GM12878 (cell line): ENCODE measurements at regions of chr6 and their contacts with region 1.

Region 1: DNA sequence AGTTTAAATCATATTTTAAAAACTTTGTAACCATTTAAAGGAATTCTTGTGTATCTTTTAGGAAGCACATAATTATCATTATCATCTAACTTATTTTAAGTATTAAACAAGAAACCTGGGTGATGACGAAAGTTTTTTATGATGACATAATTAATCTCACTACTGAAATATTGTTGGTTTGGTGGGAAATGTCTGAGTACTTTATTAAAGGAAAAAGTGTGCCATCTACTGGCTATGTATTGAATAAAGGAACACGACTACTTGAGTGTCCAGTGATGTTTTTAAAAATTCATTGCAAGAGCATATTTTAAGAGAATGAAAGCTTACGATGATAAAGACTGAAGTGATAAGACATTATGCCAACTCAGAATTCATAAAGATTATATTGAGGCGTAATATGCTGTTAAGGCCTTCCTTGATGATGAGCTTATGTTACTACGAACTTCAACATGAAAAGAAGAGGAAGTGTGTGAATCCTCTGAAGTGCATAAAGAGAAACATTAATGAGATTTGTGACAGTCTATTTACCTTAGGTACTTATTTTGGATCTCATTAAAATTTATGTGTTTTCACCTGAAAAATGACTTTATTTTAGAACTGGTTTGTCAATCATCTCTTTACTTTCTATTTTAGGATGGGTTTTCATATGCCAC is 12.0 kb upstream of the TRMT11 start:
- DNase-seq: no peak
- ATAC-seq: peak; percentile 93
- H3K4me3 ChIP-seq: no peak overlapping the region
- H3K27ac ChIP-seq: no peak overlapping the region
- H3K4me1 ChIP-seq: no peaks in the 10 kb centered on the region
- H3K27me3 ChIP-seq: no peaks in the 10 kb centered on the region
- CTCF ChIP-seq: peak; percentile 21 to 57 (median 49); a peak in 3 of 6 replicates
- EP300 ChIP-seq: no peak
- POLR2A ChIP-seq: no peak
- RAD21 ChIP-seq: peak; percentile 48

Region 2: GRCh38 chr6:125764121-125764671 is 210.1 kb before region 1 on chr6:
- CTCF ChIA-PET with region 1: interaction called, 11 read pairs
- POLR2A ChIA-PET with region 1: no interaction called
- RAD21 ChIA-PET with region 1: no interaction called
- SMC1A ChIA-PET with region 1: interaction called, 5 read pairs
- in situ Hi-C with region 1: no loop called
- intact Hi-C with region 1: no loop called
- DNase-seq: no peak
- ATAC-seq: no peak; the same call in 2 of the 3 replicates
- H3K4me3 ChIP-seq: no peak overlapping the region
- H3K27ac ChIP-seq: no peak overlapping the region
- H3K4me1 ChIP-seq: no peaks in the 10 kb centered on the region
- H3K27me3 ChIP-seq: no peaks in the 10 kb centered on the region
- CTCF ChIP-seq: no peak
- EP300 ChIP-seq: no peak
- POLR2A ChIP-seq: no peak
- RAD21 ChIP-seq: no peak

Region 3: DNA sequence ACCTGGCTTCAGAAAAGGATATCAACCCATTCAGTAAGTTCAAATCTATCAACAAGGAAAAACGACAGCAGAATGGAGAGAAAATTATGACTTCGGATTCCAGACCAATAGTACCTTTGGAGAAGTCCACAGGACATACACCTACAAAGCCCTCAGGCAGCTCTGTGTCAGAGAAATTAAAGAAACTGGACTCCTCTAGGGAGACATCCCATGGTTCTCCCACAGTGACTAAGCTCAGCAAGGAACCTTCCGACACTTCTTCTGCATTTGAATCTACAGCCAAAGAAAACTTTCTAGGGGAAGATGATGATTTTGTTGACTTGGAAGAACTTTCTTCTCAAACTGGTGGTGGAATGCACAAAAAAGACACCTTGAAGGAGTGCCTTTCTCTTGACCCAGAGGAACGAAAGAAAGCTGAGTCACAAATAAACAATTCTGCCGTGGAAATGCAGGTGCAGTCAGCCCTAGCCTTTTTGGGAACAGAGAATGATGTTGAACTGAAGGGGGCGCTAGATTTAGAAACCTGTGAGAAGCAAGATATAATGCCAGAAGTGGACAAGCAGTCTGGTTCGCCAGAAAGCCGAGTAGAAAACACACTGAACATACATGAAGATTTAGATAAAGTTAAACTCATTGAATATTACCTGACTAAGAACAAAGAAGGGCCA is 85.2 kb before region 1 on chr6:
- CTCF ChIA-PET with region 1: interaction called, 38 read pairs
- POLR2A ChIA-PET with region 1: no interaction called
- RAD21 ChIA-PET with region 1: interaction called, 4 read pairs
- SMC1A ChIA-PET with region 1: interaction called, 8 read pairs
- in situ Hi-C with region 1: no loop called
- intact Hi-C with region 1: no loop called
- DNase-seq: no peak
- ATAC-seq: peak; percentile 66
- H3K4me3 ChIP-seq: no peak overlapping the region
- H3K27ac ChIP-seq: no peak overlapping the region
- H3K4me1 ChIP-seq: no peaks in the 10 kb centered on the region
- H3K27me3 ChIP-seq: no peaks in the 10 kb centered on the region
- CTCF ChIP-seq: peak; percentile 46 to 52 (median 50)
- EP300 ChIP-seq: no peak
- POLR2A ChIP-seq: no peak
- RAD21 ChIP-seq: peak; percentile 51

Region 4: DNA sequence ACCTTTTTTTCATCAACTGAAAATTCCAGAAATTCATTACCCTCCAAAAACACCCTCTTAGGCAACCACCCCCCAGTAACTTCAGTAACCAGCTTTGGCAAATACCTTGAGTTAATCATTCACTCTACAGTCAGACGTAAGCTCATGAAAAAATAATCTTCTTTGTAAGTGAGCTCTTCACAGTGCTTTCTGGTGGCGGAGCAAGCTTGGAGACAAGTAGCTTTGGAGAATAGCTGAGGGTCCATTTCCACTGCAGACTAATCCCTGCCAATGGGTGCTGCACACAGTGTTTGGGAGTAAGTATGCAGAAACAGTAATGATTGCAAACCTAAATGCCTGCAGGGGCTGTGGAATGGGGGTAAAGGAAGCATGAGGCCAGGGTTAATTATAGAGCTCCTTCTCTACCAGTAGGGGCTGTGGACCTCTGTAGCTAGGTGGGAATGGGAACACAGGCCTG is 74.6 kb before region 1 on chr6:
- CTCF ChIA-PET with region 1: interaction called, 7 read pairs
- POLR2A ChIA-PET with region 1: no interaction called
- RAD21 ChIA-PET with region 1: interaction called, 4 read pairs
- SMC1A ChIA-PET with region 1: interaction called, 10 read pairs
- in situ Hi-C with region 1: no loop called
- intact Hi-C with region 1: no loop called
- DNase-seq: no peak
- ATAC-seq: peak; percentile 39; the same call in 2 of the 3 replicates
- H3K4me3 ChIP-seq: no peak overlapping the region
- H3K27ac ChIP-seq: no peak overlapping the region
- H3K4me1 ChIP-seq: no peaks in the 10 kb centered on the region
- H3K27me3 ChIP-seq: no peaks in the 10 kb centered on the region
- CTCF ChIP-seq: no peak
- EP300 ChIP-seq: no peak
- POLR2A ChIP-seq: no peak
- RAD21 ChIP-seq: no peak

Region 5: DNA sequence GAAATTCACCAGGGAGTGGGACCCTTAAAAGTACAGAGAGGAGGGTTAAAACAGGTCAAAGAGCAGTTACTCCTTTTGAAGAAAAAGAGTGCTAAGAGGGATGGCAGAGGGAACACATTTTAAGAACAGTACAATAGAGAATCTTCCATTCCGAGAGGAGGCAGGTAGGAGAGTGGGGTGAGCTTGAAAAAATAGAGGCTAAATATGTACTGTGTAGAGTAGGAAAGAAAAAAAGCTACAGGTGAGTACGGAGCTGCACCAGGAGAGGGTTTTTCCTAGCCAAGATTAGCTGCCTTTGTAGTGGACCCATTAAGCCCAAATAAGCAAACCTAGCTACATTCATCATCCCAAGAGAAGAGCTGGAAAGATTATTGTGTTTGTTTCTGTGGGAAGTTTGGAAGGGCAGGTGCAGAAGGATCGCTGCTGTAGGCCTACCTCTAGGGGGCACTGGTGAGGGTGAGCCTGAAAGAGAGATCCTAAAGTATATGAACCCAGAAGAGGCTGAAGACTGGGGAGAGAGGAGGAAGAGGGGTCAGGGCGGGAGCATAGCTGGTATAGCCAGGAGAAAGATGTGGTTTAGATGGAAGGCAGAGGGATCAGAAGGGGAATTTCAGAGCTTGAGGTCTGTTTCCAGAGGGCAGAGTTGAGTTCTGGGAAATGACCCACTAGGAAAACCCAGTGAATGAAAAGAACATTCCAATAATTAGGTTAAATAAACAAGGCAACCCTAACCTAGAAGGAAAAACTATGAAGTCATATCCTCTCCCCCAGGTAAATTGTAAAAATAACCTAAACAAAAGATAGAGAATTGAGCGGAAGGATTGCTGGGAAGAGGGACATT is 68.0 kb before region 1 on chr6:
- CTCF ChIA-PET with region 1: interaction called, 21 read pairs
- POLR2A ChIA-PET with region 1: interaction called, 3 read pairs
- RAD21 ChIA-PET with region 1: interaction called, 4 read pairs
- SMC1A ChIA-PET with region 1: interaction called, 6 read pairs
- in situ Hi-C with region 1: no loop called
- intact Hi-C with region 1: no loop called
- DNase-seq: no peak
- ATAC-seq: peak; percentile 55
- H3K4me3 ChIP-seq: no peak overlapping the region
- H3K27ac ChIP-seq: no peak overlapping the region
- H3K4me1 ChIP-seq: peaks cover 16% of the 10 kb centered on the region
- H3K27me3 ChIP-seq: no peaks in the 10 kb centered on the region
- CTCF ChIP-seq: peak; percentile 63 to 94 (median 91)
- EP300 ChIP-seq: no peak
- POLR2A ChIP-seq: no peak
- RAD21 ChIP-seq: peak; percentile 58

Region 6: DNA sequence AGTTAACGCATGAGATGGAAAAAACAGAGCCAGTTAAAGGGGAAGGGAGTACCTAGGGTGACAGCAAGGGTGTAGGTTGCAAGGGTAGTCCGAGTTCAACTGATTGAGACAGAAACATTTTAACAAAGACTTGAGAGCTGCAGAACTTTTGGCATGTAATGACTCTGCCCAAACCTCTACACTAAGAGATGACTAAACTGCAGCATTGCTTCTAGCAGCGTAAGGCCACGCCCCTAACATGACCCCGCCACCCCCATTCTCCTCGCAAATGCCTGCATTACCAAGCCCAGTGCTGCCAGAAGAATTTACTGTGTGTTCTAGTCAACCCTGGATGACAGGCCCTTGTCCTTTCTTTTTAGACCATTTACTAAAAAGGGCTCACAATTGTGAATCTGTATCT is 24.0 kb before region 1 on chr6:
- CTCF ChIA-PET with region 1: interaction called, 183 read pairs
- POLR2A ChIA-PET with region 1: no interaction called
- RAD21 ChIA-PET with region 1: interaction called, 14 read pairs
- SMC1A ChIA-PET with region 1: interaction called, 27 read pairs
- in situ Hi-C with region 1: no loop called
- intact Hi-C with region 1: no loop called
- DNase-seq: no peak
- ATAC-seq: no peak
- H3K4me3 ChIP-seq: no peak overlapping the region
- H3K27ac ChIP-seq: no peak overlapping the region
- H3K4me1 ChIP-seq: no peaks in the 10 kb centered on the region
- H3K27me3 ChIP-seq: no peaks in the 10 kb centered on the region
- CTCF ChIP-seq: no peak
- EP300 ChIP-seq: no peak
- POLR2A ChIP-seq: no peak
- RAD21 ChIP-seq: no peak

Region 7: GRCh38 chr6:125986300-125987025 is 12.1 kb after region 1 on chr6 and contains the start of gene TRMT11:
- CTCF ChIA-PET with region 1: interaction called, 44 read pairs
- POLR2A ChIA-PET with region 1: interaction called, 9 read pairs
- RAD21 ChIA-PET with region 1: interaction called, 13 read pairs
- SMC1A ChIA-PET with region 1: interaction called, 23 read pairs
- in situ Hi-C with region 1: no loop called
- intact Hi-C with region 1: no loop called
- DNase-seq: peak; percentile 69
- ATAC-seq: peak; percentile 94
- H3K4me3 ChIP-seq: peak within 1 kb of the TSS; percentile 85
- H3K27ac ChIP-seq: peak within 1 kb of the TSS; percentile 95
- H3K4me1 ChIP-seq: peaks cover 5% of the 10 kb centered on the region; the same call in 1 of the 2 replicates
- H3K27me3 ChIP-seq: no peaks in the 10 kb centered on the region
- CTCF ChIP-seq: no peak
- EP300 ChIP-seq: 0 out of 4 replicates have a peak, but pooled peaks of 1 of the 2 experiments have one; percentile 34
- POLR2A ChIP-seq: peak; percentile 96
- RAD21 ChIP-seq: no peak
- polyA plus RNA-seq, gene TRMT11: 56.8 to 72.4 TPM